Right ventricle myocardium inferior (tissue), 1 donor: ENCODE measurements at regions of chr12 and their contacts with region 1.

Region 1: DNA sequence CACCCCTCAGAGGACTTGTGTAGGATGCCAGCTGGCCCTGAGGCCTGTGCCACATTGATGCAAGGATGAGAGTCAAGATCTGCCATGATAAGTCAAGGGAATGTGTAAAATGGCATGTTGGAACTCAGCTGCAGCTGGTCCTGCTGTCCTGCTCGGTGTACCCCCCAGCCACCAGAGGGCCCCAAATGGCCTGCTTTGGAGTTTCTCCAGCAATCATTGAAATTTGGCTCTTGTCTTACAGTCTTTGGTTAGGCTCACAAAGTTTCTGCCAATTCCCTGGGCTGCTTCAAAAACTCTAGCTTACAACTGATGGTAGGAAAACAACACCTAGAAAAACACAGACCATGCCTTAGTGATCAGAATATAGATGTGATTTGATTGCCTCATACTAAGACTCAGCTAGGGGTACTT is 76.8 kb downstream of the HSD17B6 start:
- DNase-seq: peak; percentile 71
- ATAC-seq: peak; percentile 60

Region 2: DNA sequence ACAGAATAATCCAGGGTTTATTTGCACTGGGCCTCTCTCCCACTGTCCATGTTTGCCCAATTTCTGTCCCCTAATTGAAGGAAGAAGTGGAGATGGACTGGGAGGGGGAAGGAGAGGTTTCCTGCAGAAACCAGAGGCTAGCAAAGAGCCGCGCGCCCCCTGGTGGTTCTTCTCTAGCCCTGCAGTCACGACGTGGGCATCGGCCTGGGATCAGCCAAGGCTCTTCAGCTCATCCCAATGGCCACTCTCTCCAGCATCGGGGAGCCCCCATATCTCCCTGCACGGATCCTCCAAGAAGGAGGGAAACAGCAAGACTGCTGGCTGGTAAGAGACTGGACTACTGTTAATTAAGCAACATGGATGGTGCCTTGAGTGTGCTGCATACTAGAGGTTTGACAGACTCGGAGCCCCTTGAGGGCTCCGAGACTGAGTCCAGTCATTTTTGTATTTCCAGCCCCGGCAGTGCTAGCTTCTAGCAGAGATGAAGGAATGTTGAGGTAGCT is 147.7 kb after region 1 on chr12:
- intact Hi-C with region 1: loop called (anchors 5 kb)
- DNase-seq: peak; percentile 93
- ATAC-seq: peak; percentile 82